CD4-positive, alpha-beta memory T cell (primary cell): ENCODE measurements at regions of chr10 and their contacts with region 1.

Region 1: DNA sequence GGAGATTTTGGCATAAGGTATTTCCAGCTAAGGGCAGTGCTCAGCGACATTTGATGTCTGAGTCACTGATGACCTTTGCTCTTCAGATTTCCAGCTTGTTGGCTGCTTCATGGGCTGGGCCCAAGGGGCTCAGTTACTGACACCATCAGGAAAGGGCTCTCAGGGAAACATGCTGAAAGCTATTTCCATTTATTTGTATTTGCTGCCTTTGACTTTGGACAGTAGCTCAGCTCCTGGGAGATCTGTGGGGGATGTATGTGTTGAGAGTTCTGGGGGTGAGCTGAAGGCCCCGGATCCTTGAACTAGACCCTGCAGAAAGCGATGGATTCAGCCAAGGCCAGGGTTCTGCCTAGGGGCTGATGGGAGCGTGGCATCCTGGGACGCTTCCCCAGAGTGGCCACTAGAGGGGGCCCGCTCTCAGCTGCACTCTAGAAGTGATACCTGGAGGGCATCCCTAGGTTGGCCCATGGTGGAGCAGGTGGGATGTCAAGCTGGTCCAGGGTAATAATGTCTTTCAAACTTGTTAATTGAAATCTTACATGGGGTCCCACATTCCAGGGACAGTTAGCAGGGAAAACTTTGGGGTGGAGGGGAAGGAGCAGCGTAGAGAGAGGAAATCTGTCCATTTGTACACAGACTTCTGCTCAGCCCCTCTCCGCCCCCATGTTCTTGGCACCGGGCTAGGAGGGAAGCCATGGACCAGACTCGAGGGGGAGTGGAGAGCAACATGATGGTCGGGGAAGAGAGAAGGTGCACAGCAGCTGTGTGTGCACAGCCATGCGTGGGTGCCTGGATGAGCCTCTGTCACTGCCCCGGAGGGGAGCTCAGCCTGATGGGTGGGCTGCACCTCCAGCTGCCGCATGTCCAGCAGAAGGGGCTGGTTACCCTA is 3.0 kb upstream of the BTBD16 start:
- DNase-seq: peak in 4 of 5 donors; percentile 6 to 29 (median 23)
- H3K4me3 ChIP-seq: no peak overlapping the region
- H3K4me3 Mint-ChIP-seq: no peak overlapping the region
- H3K27ac ChIP-seq: no peak overlapping the region
- H3K27ac Mint-ChIP-seq: no peak overlapping the region
- H3K4me1 ChIP-seq: no peaks in the 10 kb centered on the region
- H3K4me1 Mint-ChIP-seq: peaks cover 0 to 5% (median 0%) of the 10 kb centered on the region in 4 donors
- H3K27me3 ChIP-seq: peaks cover 4% of the 10 kb centered on the region
- H3K27me3 Mint-ChIP-seq: peaks cover 12 to 32% of the 10 kb centered on the region in 2 donors

Region 2: DNA sequence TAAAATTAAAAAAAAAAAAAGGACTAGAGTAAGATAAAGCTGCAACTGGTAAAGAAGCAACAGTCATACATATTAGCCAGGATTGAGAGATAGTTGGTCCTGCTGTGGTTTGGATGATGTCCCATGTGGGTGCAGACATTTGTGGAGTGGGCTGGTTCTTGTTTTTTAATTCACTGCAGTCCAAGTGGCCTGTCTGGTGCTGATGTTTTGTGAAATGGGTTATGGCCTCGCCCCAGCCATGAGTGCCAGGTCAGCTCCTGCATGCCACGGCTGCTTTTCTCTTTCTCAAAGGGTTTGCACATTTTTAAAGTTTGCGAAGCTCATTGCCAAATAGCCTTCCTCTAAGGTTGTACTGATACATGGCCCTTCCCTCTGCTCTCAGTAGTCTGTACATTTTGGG is 11.1 kb before region 1 on chr10:
- CTCF ChIA-PET with region 1: interaction called, 18 read pairs
- POLR2A ChIA-PET with region 1: no interaction called
- intact Hi-C with region 1: no loop called
- DNase-seq: no peak
- H3K4me3 ChIP-seq: no peak overlapping the region
- H3K4me3 Mint-ChIP-seq: no peak overlapping the region
- H3K27ac ChIP-seq: no peak overlapping the region
- H3K27ac Mint-ChIP-seq: no peak overlapping the region
- H3K4me1 ChIP-seq: no peaks in the 10 kb centered on the region
- H3K4me1 Mint-ChIP-seq: no peaks in the 10 kb centered on the region
- H3K27me3 ChIP-seq: no peaks in the 10 kb centered on the region
- H3K27me3 Mint-ChIP-seq: peaks cover 4 to 32% of the 10 kb centered on the region in 2 donors

Region 3: GRCh38 chr10:122298598-122299301 is 30.7 kb after region 1 on chr10:
- CTCF ChIA-PET with region 1: interaction called, 12 read pairs
- POLR2A ChIA-PET with region 1: no interaction called
- intact Hi-C with region 1: no loop called
- DNase-seq: peak; percentile 55 to 63 (median 56)
- H3K4me3 ChIP-seq: peak overlapping the region in 1 of 2 donors; percentile 6
- H3K4me3 Mint-ChIP-seq: peak overlapping the region in 6 of 8 donors; percentile 53 to 74 (median 60)
- H3K27ac ChIP-seq: no peak overlapping the region
- H3K27ac Mint-ChIP-seq: peak overlapping the region in 4 of 7 donors; percentile 1 to 54 (median 47)
- H3K4me1 ChIP-seq: peaks cover 17% of the 10 kb centered on the region
- H3K4me1 Mint-ChIP-seq: peaks cover 12 to 27% (median 16%) of the 10 kb centered on the region in 4 donors
- H3K27me3 ChIP-seq: no peaks in the 10 kb centered on the region
- H3K27me3 Mint-ChIP-seq: peaks cover 0 to 5% of the 10 kb centered on the region in 2 donors